HEK293 (cell line): ENCODE measurements at regions of chr20 and their contacts with region 1.

Region 1: GRCh38 chr20:64038565-64039292 is 2.7 kb downstream of the C20orf204 start:
- H3K4me3 ChIP-seq: peak overlapping the region; percentile 46
- H3K27ac ChIP-seq: peak overlapping the region; percentile 3; the same call in 1 of the 2 replicates
- H3K4me1 ChIP-seq: peaks cover 7% of the 10 kb centered on the region; the same call in 1 of the 2 replicates
- CTCF ChIP-seq: peak; percentile 89

Region 2: GRCh38 chr20:63980806-63981728 is 57.7 kb before region 1 on chr20 and contains the start of gene PRPF6:
- CTCF ChIA-PET with region 1: interaction called, 15 read pairs
- POLR2A ChIA-PET with region 1: interaction called, 6 read pairs
- H3K4me3 ChIP-seq: peak within 1 kb of the TSS; percentile 95
- H3K27ac ChIP-seq: peak within 1 kb of the TSS; percentile 78
- H3K4me1 ChIP-seq: peaks cover 13% of the 10 kb centered on the region
- CTCF ChIP-seq: peak; percentile 100

Region 3: GRCh38 chr20:64010711-64011237 is 28.0 kb before region 1 on chr20:
- CTCF ChIA-PET with region 1: no interaction called
- POLR2A ChIA-PET with region 1: no interaction called
- H3K4me3 ChIP-seq: no peak overlapping the region
- H3K27ac ChIP-seq: no peak overlapping the region
- H3K4me1 ChIP-seq: no peaks in the 10 kb centered on the region
- CTCF ChIP-seq: no peak

Region 4: DNA sequence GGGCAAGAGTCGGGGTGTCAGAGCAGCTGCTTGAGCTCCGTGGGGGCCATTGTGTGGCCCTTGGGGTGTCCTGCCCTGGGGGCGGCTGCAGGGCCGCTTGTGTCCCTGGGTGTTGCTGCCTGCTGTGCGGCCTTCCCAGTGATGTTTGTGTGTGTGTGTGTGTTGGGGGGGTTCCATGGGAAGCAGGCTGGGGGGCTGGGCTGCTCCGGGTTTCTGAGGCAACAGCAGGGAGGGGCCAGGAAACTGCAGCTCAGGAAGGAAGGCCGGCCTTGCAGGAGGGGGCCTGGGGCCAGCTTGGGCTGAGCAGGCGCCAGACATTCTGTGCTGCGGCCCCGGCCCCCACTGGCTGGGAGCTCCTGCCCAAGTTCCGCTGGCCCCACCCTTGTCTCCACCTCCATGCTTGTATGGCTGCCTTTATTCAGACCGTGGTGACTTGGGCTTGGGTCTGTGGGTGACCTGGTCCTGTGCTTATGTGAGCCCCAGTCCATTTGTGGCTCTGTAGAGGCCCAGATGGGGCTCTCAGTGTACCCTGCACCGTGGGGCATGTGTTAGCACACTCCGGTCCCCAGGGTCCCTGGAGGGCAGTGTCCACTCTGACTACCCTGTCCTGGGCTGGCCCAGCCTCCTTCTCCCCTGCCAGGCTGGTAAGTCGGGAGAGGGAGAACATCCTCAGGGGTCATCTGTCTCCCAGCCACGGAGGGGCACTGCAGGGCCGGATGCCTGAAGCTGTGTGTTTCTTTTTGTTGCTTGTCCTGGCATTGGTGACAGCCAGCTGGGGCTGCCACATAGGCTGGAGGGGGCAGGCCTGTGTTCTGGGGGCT is 15.3 kb after region 1 on chr20:
- CTCF ChIA-PET with region 1: interaction called, 39 read pairs
- POLR2A ChIA-PET with region 1: interaction called, 5 read pairs
- H3K4me3 ChIP-seq: no peak overlapping the region
- H3K27ac ChIP-seq: no peak overlapping the region
- H3K4me1 ChIP-seq: peaks cover 6% of the 10 kb centered on the region
- CTCF ChIP-seq: peak; percentile 60; the same call in 1 of the 2 replicates

Region 5: DNA sequence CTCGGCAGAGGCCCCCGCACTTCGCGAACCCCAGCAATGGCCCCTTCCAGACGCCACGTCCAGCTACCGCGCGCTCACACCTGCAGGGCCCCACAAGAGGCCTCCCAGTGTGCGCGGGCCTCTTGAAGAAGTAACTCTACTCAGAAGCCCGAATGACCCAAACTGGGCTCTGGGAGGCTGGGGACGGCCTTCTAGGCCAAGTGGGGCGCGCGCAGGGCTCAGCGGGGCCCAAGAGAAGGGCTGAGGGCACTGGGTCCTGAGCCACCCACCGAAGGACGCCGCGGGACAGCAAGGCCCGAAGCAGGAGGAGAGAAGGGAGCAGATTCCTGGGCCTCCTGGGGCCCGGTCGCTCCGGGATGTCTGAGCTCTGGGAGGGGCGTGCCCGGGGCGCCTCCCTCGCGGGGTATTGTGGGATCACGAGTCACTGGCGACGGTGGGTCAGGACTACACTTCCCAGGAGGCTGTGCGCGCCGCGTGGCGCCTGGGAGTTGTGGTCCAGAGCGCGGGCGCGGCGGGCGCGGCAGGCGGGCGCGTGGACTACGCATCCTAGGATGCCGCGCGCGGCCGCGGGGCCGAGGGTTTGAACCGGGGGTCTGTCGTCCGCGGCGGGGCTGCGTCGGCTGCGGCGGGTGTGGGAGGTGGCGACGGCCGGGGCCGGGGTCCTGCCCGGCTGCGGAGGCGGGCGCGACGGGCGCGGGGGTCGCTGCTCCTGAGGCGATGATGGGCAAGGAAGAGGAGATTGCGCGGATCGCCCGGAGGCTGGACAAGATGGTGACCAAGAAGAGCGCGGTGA is 24.1 kb after region 1 on chr20 and contains the start of gene TCEA2:
- CTCF ChIA-PET with region 1: interaction called, 39 read pairs
- POLR2A ChIA-PET with region 1: interaction called, 11 read pairs
- H3K4me3 ChIP-seq: peak within 1 kb of the TSS; percentile 80
- H3K27ac ChIP-seq: peak within 1 kb of the TSS; percentile 79
- H3K4me1 ChIP-seq: no peaks in the 10 kb centered on the region
- CTCF ChIP-seq: no peak